Esophagus muscularis mucosa (tissue), 4 donors: ENCODE measurements at regions of chr2 and their contacts with region 1.

Region 1: GRCh38 chr2:38740851-38741731 is 10.1 kb downstream of the SRSF7 start:
- DNase-seq: no peak
- H3K4me3 ChIP-seq: peak overlapping the region in 1 of 4 donors; percentile 14
- H3K27ac ChIP-seq: peak overlapping the region; percentile 69 to 75 (median 70)
- H3K4me1 ChIP-seq: peaks cover 22 to 68% (median 66%) of the 10 kb centered on the region in 4 donors
- H3K27me3 ChIP-seq: no peaks in the 10 kb centered on the region
- CTCF ChIP-seq: peak; percentile 62 to 72 (median 66)
- EP300 ChIP-seq: no peak
- POLR2A ChIP-seq: no peak

Region 2: DNA sequence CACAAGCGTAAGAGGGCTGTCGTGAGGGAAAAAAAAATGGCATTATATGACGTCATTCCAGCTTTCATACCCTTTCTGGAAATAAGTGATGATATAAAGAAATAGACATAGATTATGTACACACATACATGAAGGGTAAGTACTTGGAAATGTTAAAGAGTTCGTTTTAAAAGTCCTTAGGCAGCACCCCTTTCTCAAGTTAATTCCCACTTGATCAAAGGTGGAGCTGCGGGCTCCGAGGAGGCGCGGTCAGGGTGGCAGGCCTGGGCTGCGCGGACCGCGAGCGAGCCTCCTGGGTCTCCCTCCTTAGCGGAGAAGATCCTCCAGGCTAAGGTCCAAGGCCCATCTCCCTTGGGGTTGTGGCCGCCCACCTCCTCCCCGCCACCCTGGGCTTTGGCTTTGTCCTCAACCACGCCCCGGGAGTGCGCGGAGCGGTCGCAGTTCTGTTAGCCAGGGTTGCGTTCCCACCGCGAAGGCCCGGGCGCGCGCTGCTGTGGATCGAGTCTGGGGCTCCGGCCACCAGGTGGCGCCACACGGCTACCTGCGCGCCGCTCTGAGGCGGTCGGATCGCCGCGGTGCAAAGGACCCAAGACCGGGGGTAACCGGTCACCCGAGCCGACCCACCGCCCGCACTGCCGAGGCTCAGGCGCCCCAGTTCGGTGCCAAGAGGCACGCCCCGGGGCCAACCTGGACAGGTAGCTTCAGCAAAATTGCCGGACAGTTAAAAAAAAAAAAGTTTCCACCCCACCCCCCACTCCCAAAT is 205.2 kb before region 1 on chr2:
- intact Hi-C with region 1: loop called (anchors 5 kb)
- DNase-seq: peak; percentile 94
- H3K4me3 ChIP-seq: peak overlapping the region; percentile 55 to 64 (median 58)
- H3K27ac ChIP-seq: peak overlapping the region; percentile 74 to 82 (median 79)
- H3K4me1 ChIP-seq: peaks cover 4 to 44% (median 41%) of the 10 kb centered on the region in 4 donors
- H3K27me3 ChIP-seq: no peaks in the 10 kb centered on the region
- CTCF ChIP-seq: peak; percentile 88 to 95 (median 95)
- EP300 ChIP-seq: no peak
- POLR2A ChIP-seq: no peak

Region 3: GRCh38 chr2:38997781-38998180 is 256.7 kb after region 1 on chr2:
- intact Hi-C with region 1: no loop called
- DNase-seq: no peak
- H3K4me3 ChIP-seq: no peak overlapping the region
- H3K27ac ChIP-seq: no peak overlapping the region
- H3K4me1 ChIP-seq: no peaks in the 10 kb centered on the region
- H3K27me3 ChIP-seq: no peaks in the 10 kb centered on the region
- CTCF ChIP-seq: no peak
- EP300 ChIP-seq: no peak
- POLR2A ChIP-seq: no peak